CD8-positive, alpha-beta T cell (primary cell): ENCODE measurements at regions of chr19 and their contacts with region 1.

Region 1: DNA sequence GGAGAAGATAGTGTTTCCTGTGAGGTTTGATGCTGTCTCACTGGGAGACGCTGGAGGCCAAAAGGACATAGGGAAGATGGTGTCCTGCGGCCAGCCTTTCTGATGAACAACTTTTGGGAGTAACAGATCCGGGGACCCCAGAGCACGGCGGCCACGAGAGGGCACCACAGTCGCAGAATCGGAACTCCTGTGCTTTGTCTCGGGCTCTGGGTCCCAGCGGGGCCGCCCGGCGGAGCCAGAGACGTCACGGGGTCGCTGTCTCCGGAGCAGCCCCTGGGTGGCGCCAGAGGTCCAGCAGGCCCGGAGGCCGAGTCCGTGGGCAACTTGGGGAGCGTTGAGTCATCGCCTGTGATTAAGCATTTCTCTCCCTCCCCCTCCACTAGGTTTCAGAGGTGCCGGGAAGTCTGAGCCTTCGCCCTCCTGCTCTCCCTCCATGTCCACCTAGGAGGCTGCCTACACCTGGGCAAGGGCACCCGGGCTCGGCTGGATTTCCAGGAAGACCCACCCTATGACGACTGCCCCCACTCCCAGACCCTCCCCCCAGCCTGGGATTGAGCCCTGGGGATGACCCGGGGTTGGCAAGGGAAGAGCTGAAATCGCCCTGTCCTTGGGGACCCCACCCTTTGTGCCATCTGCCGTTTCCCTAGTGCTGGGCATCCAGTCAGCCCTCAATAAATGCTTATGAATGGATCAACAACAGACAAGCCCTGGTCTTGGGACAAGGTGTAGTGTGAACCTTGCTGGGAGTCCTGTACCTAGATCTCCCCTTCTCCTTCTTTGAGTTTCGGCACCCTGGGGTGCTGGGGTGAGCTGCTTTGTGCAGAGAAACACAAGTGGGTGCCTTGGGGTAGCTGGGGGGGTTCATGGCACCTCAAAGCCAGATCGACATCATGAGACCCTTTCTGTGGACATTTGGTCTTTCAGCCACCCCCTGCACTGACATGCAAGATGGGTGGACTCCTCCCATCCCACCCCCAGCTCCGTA is 3.4 kb downstream of the NANOS3 start:
- DNase-seq: peak; percentile 96 to 99 (median 98)
- ATAC-seq: peak; percentile 96
- H3K4me3 ChIP-seq: peak overlapping the region; percentile 13 to 20
- H3K4me3 Mint-ChIP-seq: peak overlapping the region; percentile 69
- H3K27ac ChIP-seq: peak overlapping the region in 1 of 2 experiments; percentile 61
- H3K27ac Mint-ChIP-seq: peak overlapping the region; percentile 66
- H3K4me1 ChIP-seq: peaks cover 51% of the 10 kb centered on the region
- H3K4me1 Mint-ChIP-seq: peaks cover 43% of the 10 kb centered on the region
- H3K27me3 ChIP-seq: no peaks in the 10 kb centered on the region
- H3K27me3 Mint-ChIP-seq: no peaks in the 10 kb centered on the region
- CTCF ChIP-seq: peak; percentile 99

Region 2: DNA sequence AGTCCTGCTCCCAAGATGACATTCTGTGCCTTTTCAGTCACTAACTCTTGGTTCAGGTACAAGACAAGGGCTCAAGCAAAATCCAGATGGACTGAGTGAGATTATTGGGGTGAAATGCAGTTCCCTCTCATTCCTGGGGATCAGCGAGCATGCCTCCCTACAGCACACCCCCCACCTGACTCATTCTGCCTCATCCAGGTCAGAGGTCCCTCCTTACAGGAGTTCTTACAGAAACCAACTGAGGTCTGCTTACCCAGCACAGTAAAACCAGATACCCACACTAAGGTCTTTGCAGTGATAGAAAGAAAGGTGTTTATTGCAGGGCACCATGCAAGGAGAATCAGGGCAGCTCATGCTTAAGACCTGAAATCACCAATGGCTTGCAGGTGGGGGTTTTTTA is 137.6 kb before region 1 on chr19:
- CTCF ChIA-PET with region 1: no interaction called
- POLR2A ChIA-PET with region 1: no interaction called
- intact Hi-C with region 1: no loop called
- DNase-seq: no peak
- ATAC-seq: no peak
- H3K4me3 ChIP-seq: no peak overlapping the region
- H3K4me3 Mint-ChIP-seq: no peak overlapping the region
- H3K27ac ChIP-seq: no peak overlapping the region
- H3K27ac Mint-ChIP-seq: no peak overlapping the region
- H3K4me1 ChIP-seq: peaks cover 3% of the 10 kb centered on the region
- H3K4me1 Mint-ChIP-seq: peaks cover 2% of the 10 kb centered on the region
- H3K27me3 ChIP-seq: no peaks in the 10 kb centered on the region
- H3K27me3 Mint-ChIP-seq: no peaks in the 10 kb centered on the region
- CTCF ChIP-seq: no peak

Region 3: DNA sequence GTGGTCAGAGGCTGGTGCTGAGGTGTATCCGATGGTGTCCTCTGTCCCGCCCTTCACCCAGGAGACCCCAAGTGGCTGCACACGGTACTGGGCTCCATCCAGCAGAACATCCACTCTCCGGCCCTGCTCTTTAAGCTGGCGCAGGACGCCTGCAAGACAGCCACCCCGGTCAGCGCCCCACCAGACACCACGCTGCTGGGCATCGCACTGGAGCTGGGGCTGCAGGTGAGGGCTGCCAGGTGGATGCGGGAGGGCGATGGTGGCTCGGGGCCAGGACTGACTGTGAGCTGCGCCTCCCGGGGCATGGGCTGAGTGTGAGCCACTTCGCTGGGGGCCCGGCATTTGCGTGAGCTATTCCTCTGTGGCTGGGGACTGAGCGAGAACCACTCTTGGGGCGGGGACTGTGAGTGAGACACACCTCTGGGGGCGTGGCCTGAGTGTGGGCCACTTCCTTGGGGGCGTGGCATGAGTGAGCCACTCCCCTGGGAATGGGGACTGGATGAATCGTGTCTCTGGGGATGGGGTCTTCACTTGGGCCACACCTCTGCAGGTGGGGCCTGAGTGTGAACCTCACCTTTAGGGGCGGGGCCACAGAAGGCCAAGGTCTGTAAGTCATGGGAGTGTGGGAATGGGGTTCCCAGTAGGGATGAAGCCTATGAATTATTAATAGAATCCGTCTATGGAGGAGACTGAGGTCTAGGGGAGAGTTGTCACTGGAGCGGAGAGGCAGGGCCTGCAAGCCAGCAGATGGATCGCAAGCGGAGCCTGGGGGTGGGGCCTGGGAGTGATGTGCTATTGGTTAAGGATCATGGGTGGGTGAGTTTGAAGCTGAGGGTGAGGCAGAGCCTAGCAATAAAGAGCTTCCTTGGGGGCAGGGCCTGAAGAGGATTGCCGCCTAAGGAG is 54.6 kb before region 1 on chr19:
- CTCF ChIA-PET with region 1: no interaction called
- POLR2A ChIA-PET with region 1: no interaction called
- intact Hi-C with region 1: no loop called
- DNase-seq: peak in 4 of 9 experiments; percentile 12 to 59 (median 38)
- ATAC-seq: no peak
- H3K4me3 ChIP-seq: no peak overlapping the region
- H3K4me3 Mint-ChIP-seq: no peak overlapping the region
- H3K27ac ChIP-seq: no peak overlapping the region
- H3K27ac Mint-ChIP-seq: peak overlapping the region; percentile 41
- H3K4me1 ChIP-seq: no peaks in the 10 kb centered on the region
- H3K4me1 Mint-ChIP-seq: peaks cover 3% of the 10 kb centered on the region
- H3K27me3 ChIP-seq: no peaks in the 10 kb centered on the region
- H3K27me3 Mint-ChIP-seq: no peaks in the 10 kb centered on the region
- CTCF ChIP-seq: no peak

Region 4: DNA sequence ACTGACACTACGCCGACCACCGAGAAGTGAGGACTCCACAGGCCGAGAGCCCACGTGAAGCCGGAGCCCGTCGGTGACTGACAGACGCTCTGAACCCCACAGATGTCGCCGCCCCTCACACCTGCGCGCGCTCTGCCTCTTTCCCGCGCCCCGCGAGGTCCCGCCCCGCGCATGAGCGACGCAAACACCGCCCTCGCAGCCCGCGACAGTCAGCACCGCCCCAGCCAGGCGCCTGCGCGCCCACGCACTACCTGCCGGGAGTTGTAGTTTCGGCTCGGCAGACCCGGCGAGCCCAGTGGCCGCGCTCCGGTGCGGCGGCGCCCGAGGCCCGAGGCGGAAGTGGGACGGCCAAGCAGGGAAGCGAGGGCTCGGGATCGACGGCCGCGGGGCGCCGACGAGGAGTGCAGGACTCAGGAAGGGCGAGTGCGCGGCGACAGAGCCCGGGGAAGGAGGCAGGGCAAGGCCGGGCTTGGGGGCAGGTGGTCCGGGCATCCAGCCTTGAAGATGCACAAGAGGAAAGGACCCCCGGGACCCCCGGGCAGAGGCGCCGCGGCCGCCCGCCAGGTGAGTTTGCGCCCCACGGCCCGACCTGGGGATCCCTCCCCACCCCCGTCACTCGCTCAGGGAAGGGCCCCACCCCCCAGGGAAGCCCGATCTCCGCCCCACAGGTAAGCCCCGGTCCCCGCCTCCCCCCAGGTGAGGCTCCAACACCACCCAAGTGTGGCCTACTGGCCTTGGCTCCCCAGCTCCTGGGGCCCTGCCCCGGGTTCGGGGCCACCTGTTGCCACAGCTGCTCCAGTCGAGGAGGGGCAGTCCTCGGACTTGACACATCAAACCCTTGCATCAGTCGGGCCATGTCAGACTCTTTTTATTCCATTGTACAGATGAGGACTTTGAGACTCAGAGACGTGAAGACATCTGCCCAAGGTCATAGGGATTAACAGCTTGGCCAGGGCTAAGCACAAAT is 25.9 kb after region 1 on chr19 and contains the starts of genes BRME1 and CC2D1A:
- CTCF ChIA-PET with region 1: interaction called, 6 read pairs
- POLR2A ChIA-PET with region 1: no interaction called
- intact Hi-C with region 1: loop called (anchors 1 to 2 kb)
- DNase-seq: peak; percentile 87 to 96 (median 94)
- ATAC-seq: peak; percentile 99
- H3K4me3 ChIP-seq: peak within 1 kb of the TSS; percentile 70 to 81
- H3K4me3 Mint-ChIP-seq: peak within 1 kb of the TSS; percentile 89
- H3K27ac ChIP-seq: peak within 1 kb of the TSS; percentile 57 to 59
- H3K27ac Mint-ChIP-seq: peak within 1 kb of the TSS; percentile 84
- H3K4me1 ChIP-seq: peaks cover 12% of the 10 kb centered on the region
- H3K4me1 Mint-ChIP-seq: peaks cover 14% of the 10 kb centered on the region
- H3K27me3 ChIP-seq: no peaks in the 10 kb centered on the region
- H3K27me3 Mint-ChIP-seq: no peaks in the 10 kb centered on the region
- CTCF ChIP-seq: no peak
- total RNA-seq, gene BRME1: 1.0 to 1.2 TPM
- total RNA-seq, gene CC2D1A: 11.3 to 16.0 TPM

Region 5: DNA sequence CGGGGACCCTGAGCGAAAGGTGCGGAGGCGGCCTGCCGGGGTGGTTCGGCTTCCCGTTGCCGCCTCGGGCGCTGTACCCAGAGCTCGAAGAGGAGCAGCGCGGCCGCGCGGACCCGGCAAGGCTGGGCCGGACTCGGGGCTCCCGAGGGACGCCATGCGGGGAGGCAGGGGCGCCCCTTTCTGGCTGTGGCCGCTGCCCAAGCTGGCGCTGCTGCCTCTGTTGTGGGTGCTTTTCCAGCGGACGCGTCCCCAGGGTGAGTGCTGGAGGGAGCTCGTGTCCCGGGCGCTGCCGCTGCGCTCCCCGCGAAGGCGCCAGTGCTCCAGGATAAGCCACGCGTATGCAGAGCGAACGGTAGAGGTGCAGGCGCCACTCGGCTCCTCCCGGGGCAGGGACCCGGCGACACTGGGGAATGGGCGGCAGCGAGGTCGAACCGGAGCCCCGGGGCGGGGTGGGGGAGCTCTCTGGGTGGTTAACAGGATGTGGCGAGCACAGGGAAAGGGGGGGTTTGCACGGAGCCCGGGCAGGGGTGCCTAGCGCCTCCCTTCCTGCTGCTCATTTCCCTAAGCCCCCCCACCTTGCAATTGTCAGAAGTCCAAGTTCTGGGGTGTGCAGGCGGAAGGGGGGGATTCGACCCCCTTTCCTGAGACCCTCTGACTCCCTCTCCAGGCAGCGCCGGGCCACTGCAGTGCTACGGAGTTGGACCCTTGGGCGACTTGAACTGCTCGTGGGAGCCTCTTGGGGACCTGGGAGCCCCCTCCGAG is 151.5 kb after region 1 on chr19 and contains the start of gene IL27RA:
- CTCF ChIA-PET with region 1: interaction called, 16 read pairs
- POLR2A ChIA-PET with region 1: interaction called, 20 read pairs
- intact Hi-C with region 1: loop called in 1 of 2 experiments (anchors 1 kb)
- DNase-seq: peak; percentile 64 to 94 (median 87)
- ATAC-seq: peak; percentile 75
- H3K4me3 ChIP-seq: peak within 1 kb of the TSS; percentile 60 to 97
- H3K4me3 Mint-ChIP-seq: peak within 1 kb of the TSS; percentile 92
- H3K27ac ChIP-seq: peak within 1 kb of the TSS; percentile 80 to 95
- H3K27ac Mint-ChIP-seq: peak within 1 kb of the TSS; percentile 94
- H3K4me1 ChIP-seq: peaks cover 26% of the 10 kb centered on the region
- H3K4me1 Mint-ChIP-seq: peaks cover 32% of the 10 kb centered on the region
- H3K27me3 ChIP-seq: no peaks in the 10 kb centered on the region
- H3K27me3 Mint-ChIP-seq: no peaks in the 10 kb centered on the region
- CTCF ChIP-seq: peak; percentile 50
- total RNA-seq, gene IL27RA: 25.4 to 25.7 TPM

Region 6: GRCh38 chr19:14073261-14073924 is 193.0 kb after region 1 on chr19:
- CTCF ChIA-PET with region 1: interaction called, 100 read pairs
- POLR2A ChIA-PET with region 1: interaction called, 3 read pairs
- intact Hi-C with region 1: loop called (anchors 1 kb)
- DNase-seq: peak; percentile 55 to 89 (median 76)
- ATAC-seq: peak; percentile 74
- H3K4me3 ChIP-seq: peak overlapping the region; percentile 69 to 86
- H3K4me3 Mint-ChIP-seq: peak overlapping the region; percentile 90
- H3K27ac ChIP-seq: peak overlapping the region; percentile 42 to 65
- H3K27ac Mint-ChIP-seq: peak overlapping the region; percentile 90
- H3K4me1 ChIP-seq: peaks cover 30% of the 10 kb centered on the region
- H3K4me1 Mint-ChIP-seq: peaks cover 10% of the 10 kb centered on the region
- H3K27me3 ChIP-seq: peaks cover 0 to 2% of the 10 kb centered on the region in 2 experiments
- H3K27me3 Mint-ChIP-seq: no peaks in the 10 kb centered on the region
- CTCF ChIP-seq: no peak

Region 7: DNA sequence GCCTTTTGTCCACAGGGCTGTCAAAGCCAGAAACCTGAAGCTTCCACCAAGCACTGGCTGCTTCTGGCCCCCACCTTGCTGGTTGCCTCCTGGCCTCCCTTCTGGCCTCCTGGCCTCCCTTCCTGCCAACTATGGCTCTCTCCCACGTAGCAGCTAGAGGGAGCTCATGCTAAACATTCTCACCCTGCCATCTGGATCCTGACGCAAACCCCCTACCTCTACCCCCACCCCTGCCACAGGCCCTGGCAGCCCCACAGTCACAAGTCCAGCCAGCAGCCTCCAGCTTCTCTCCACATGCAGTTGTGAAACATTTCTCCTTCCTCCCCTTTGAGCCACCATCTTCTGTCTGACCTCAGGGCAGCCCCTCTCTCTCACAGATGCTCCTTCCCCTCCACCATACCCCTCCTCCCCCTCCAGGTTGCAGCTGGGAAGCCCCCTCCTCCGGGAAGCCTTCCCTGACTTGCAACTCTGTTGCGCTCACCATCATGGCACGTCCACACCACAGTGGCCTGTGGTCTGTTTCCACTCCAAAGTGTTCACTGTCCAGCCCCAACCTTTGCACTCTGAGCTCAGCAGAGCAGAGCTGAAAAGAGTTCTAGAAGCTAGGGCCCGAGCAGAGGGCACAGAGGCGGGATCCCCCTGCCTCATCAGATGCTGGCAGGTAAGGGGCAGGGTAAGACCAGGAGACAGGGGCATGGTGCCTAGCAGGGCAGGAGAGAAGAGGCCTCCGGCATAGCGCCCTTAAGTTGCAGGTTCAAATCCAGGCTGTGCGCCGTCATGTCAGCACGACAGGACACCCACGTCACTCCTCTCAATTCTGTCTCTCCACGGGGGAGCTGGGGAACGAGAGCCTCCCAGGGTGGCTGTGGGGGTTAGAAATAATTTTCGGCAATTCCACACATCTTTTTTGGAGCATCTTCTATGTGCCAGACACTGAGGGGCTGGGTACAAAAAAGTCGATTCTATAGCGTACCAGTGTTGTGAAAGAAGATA is 318.3 kb after region 1 on chr19:
- CTCF ChIA-PET with region 1: no interaction called
- POLR2A ChIA-PET with region 1: no interaction called
- intact Hi-C with region 1: loop called in 1 of 2 experiments (anchors 1 kb)
- DNase-seq: no peak
- ATAC-seq: no peak
- H3K4me3 ChIP-seq: no peak overlapping the region
- H3K4me3 Mint-ChIP-seq: no peak overlapping the region
- H3K27ac ChIP-seq: no peak overlapping the region
- H3K27ac Mint-ChIP-seq: no peak overlapping the region
- H3K4me1 ChIP-seq: no peaks in the 10 kb centered on the region
- H3K4me1 Mint-ChIP-seq: peaks cover 30% of the 10 kb centered on the region
- H3K27me3 ChIP-seq: no peaks in the 10 kb centered on the region
- H3K27me3 Mint-ChIP-seq: no peaks in the 10 kb centered on the region
- CTCF ChIP-seq: no peak

Region 8: GRCh38 chr19:14487370-14488125 is 607.2 kb after region 1 on chr19:
- CTCF ChIA-PET with region 1: no interaction called
- POLR2A ChIA-PET with region 1: no interaction called
- intact Hi-C with region 1: loop called in 1 of 2 experiments (anchors 2 kb)
- DNase-seq: no peak
- ATAC-seq: no peak
- H3K4me3 ChIP-seq: no peak overlapping the region
- H3K4me3 Mint-ChIP-seq: no peak overlapping the region
- H3K27ac ChIP-seq: no peak overlapping the region
- H3K27ac Mint-ChIP-seq: no peak overlapping the region
- H3K4me1 ChIP-seq: no peaks in the 10 kb centered on the region
- H3K4me1 Mint-ChIP-seq: peaks cover 4% of the 10 kb centered on the region
- H3K27me3 ChIP-seq: no peaks in the 10 kb centered on the region
- H3K27me3 Mint-ChIP-seq: no peaks in the 10 kb centered on the region
- CTCF ChIP-seq: no peak